ENCODE measurements at regions of chr12 and their contacts with region 1.

Region 1: DNA sequence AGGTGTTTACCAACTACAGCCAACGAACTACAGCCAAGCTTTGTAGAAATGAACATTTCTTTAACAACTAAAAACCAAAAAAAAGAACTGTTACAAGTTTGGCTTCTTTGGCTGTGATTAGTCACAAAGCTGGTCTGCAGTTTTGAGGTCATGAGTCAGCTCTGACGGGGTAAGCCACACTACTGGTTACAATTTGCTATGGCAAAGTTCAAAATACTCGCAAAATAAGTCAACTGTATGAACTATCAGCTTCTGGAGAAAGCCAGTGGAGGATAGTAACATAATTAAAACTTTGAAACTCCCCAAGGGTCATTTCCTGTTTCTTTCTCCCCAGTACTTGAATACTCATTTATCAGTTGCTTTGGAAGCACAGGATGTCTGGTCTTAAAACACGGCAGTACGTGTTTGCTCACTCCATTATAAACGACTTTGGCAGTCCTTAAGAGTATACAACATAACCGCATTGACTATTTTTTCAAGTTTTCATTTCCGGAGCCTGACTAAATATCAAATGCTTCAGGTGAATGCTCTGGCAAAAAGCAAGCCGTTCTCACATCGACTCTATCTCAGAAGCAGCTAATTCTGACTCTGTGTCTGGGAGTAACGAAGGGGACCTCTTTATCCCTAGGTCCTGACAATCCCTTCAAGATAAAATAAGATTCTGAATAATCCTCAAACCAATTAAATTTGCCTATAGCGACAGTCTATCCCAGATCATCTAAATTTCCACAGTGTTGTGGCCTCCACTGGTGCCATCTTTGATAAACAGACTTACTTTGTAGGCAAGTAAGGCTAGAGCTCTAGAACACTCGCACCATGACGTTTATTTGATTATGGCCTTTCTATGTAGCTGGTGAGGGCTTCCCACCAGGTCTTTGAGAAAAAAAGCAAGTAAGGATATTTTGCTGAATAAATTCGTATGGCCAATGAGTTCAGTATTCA is 10.6 kb downstream of the PHLDA1 start:
- DNase-seq: peak; percentile 84
- ATAC-seq: peak; percentile 61
- H3K4me3 ChIP-seq: no peak overlapping the region
- H3K27ac ChIP-seq: peak overlapping the region; percentile 88
- H3K4me1 ChIP-seq: peaks cover 49 to 88% of the 10 kb centered on the region in 2 experiments
- H3K27me3 ChIP-seq: no peaks in the 10 kb centered on the region
- CTCF ChIP-seq: no peak
- POLR2A ChIP-seq: no peak
- RAD21 ChIP-seq: peak; percentile 14; the same call in 1 of the 2 replicates

Region 2: DNA sequence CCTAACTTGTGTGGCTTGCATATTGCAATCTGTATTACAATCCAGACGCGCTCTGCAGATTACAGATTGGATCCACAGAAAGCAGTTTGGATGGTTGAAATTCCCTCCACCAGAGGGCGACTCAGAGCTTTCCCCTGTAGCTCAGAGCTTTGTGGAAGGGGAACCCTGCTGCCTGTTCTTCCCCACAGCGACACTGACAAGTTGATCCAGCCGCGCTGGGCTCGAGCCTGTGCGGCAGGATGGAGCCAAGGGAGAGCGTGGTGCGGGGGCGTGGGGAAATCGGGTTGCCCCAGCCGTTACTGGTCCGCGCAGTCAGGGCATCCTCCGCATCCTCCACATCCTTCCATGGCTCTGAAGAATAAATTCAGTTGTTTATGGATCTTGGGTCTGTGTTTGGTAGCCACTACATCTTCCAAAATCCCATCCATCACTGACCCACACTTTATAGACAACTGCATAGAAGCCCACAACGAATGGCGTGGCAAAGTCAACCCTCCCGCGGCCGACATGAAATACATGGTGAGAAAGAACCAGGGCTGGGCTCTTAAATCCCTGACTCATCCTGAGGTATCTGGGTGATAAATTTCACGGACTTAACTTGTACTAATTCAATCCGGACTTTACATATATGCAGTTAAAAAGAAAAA is 686.5 kb before region 1 on chr12 and contains the start of gene GLIPR1L1:
- CTCF ChIA-PET with region 1: no interaction called
- POLR2A ChIA-PET with region 1: no interaction called
- RAD21 ChIA-PET with region 1: no interaction called
- intact Hi-C with region 1: loop called (anchors 10 kb)
- DNase-seq: peak; percentile 92
- ATAC-seq: peak; percentile 86
- H3K4me3 ChIP-seq: peak within 1 kb of the TSS; percentile 42 to 57
- H3K27ac ChIP-seq: peak within 1 kb of the TSS; percentile 63
- H3K4me1 ChIP-seq: peaks cover 16 to 25% of the 10 kb centered on the region in 2 experiments
- H3K27me3 ChIP-seq: no peaks in the 10 kb centered on the region
- CTCF ChIP-seq: peak; percentile 75 to 83 (median 75)
- POLR2A ChIP-seq: no peak
- RAD21 ChIP-seq: peak; percentile 86
- total RNA-seq, gene GLIPR1L1: not detected

Region 3: DNA sequence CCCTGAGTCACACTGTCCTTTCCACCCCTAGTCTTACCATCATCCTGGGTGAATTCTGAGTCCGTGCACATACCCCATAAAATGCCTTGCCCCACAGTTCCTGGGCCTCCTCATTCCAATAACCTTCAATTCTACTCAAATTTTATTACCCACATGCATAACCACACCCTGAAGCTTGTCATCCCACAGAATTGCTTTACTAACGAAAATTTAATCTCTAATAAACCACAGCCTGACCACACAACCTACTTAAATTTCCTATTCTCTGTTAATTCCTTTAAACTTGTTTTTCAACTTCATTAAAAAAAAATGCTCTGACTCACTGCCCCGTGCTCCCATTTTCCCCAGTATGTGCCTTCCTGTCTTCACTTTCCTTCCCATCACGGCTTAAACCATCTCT is 195.3 kb before region 1 on chr12:
- CTCF ChIA-PET with region 1: no interaction called
- POLR2A ChIA-PET with region 1: no interaction called
- RAD21 ChIA-PET with region 1: no interaction called
- intact Hi-C with region 1: loop called (anchors 2 kb)
- DNase-seq: peak; percentile 72
- ATAC-seq: peak; percentile 77
- H3K4me3 ChIP-seq: no peak overlapping the region
- H3K27ac ChIP-seq: peak overlapping the region; percentile 100
- H3K4me1 ChIP-seq: peaks cover 58 to 70% of the 10 kb centered on the region in 2 experiments
- H3K27me3 ChIP-seq: no peaks in the 10 kb centered on the region
- CTCF ChIP-seq: no peak
- POLR2A ChIP-seq: no peak
- RAD21 ChIP-seq: no peak; the same call in 1 of the 2 replicates

Region 4: GRCh38 chr12:75892731-75893408 is 128.1 kb before region 1 on chr12:
- CTCF ChIA-PET with region 1: no interaction called
- POLR2A ChIA-PET with region 1: interaction called, 4 read pairs
- RAD21 ChIA-PET with region 1: no interaction called
- intact Hi-C with region 1: loop called (anchors 5 kb)
- DNase-seq: no peak
- ATAC-seq: peak; percentile 31; the same call in 1 of the 2 replicates
- H3K4me3 ChIP-seq: no peak overlapping the region
- H3K27ac ChIP-seq: peak overlapping the region; percentile 94
- H3K4me1 ChIP-seq: peaks cover 80 to 96% of the 10 kb centered on the region in 2 experiments
- H3K27me3 ChIP-seq: no peaks in the 10 kb centered on the region
- CTCF ChIP-seq: no peak
- POLR2A ChIP-seq: no peak
- RAD21 ChIP-seq: no peak

Region 5: GRCh38 chr12:75977952-75978671 is 42.9 kb before region 1 on chr12:
- CTCF ChIA-PET with region 1: no interaction called
- POLR2A ChIA-PET with region 1: interaction called, 23 read pairs
- RAD21 ChIA-PET with region 1: interaction called, 3 to 4 read pairs
- intact Hi-C with region 1: loop called (anchors 2 kb)
- DNase-seq: peak; percentile 94
- ATAC-seq: peak; percentile 80
- H3K4me3 ChIP-seq: no peak overlapping the region
- H3K27ac ChIP-seq: peak overlapping the region; percentile 98
- H3K4me1 ChIP-seq: peaks cover 70 to 89% of the 10 kb centered on the region in 2 experiments
- H3K27me3 ChIP-seq: no peaks in the 10 kb centered on the region
- CTCF ChIP-seq: 0 out of 6 replicates have a peak, but pooled peaks of 1 of the 3 experiments have one; percentile 3
- POLR2A ChIP-seq: no peak
- RAD21 ChIP-seq: peak; percentile 38

Region 6: DNA sequence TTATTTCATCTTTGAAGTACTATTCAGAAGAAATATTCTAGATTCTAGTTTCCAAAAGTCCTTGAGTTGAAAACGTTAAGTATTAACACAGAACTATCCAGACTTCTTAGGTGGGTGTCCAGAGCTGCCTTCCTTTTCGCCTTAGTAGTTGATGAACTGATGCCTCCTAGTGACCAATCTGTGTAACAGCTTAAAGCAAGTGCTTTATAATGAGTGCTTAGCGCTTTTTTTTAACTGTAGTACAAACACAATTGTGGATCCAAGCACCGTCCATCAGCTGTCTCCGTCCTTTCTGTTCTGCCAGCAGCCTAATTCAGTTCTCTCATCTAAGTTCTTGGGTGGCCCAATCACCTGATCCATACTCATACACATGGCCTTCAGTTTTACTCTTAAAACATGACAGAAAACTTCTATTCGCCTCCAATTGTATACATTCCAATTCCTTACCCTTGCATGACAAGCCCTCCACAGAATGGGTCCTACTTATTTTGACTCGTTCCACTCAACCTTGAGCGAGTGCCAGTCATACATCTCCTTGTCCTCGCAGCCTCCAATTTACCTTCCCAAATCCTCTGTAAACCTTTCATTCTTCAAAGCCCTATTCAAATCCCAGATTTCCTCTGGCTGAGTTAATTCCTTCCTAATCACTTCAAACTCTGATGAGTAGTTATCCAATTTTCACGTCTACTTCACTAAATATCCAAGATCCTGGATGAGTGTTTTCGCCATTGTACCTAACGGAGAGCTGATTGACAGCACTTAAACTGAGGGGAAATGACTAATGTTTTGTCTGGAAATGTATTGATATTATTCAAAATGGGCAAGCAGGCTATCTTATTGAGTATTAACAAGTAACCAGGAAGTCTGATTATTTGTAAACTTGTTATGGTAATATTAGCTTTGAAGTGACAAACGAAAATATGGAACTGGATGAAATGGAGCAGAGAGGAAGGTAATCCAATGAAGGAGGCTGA is 16.4 kb after region 1 on chr12:
- CTCF ChIA-PET with region 1: no interaction called
- POLR2A ChIA-PET with region 1: no interaction called
- RAD21 ChIA-PET with region 1: no interaction called
- intact Hi-C with region 1: no loop called
- DNase-seq: no peak
- ATAC-seq: peak; percentile 60
- H3K4me3 ChIP-seq: no peak overlapping the region
- H3K27ac ChIP-seq: peak overlapping the region; percentile 57
- H3K4me1 ChIP-seq: peaks cover 25 to 50% of the 10 kb centered on the region in 2 experiments
- H3K27me3 ChIP-seq: no peaks in the 10 kb centered on the region
- CTCF ChIP-seq: peak; percentile 26 to 64 (median 42); a peak in 4 of 6 replicates
- POLR2A ChIP-seq: no peak
- RAD21 ChIP-seq: peak; percentile 60

Region 7: GRCh38 chr12:76942267-76942666 is 921.3 kb after region 1 on chr12:
- CTCF ChIA-PET with region 1: no interaction called
- POLR2A ChIA-PET with region 1: no interaction called
- RAD21 ChIA-PET with region 1: no interaction called
- intact Hi-C with region 1: no loop called
- DNase-seq: no peak
- ATAC-seq: no peak
- H3K4me3 ChIP-seq: no peak overlapping the region
- H3K27ac ChIP-seq: no peak overlapping the region
- H3K4me1 ChIP-seq: peaks cover 0 to 10% of the 10 kb centered on the region in 2 experiments; a peak in 1 of 4 replicates
- H3K27me3 ChIP-seq: no peaks in the 10 kb centered on the region
- CTCF ChIP-seq: no peak
- POLR2A ChIP-seq: no peak
- RAD21 ChIP-seq: no peak